Right ventricle myocardium superior (tissue), 1 donor: ENCODE measurements at regions of chr6 and their contacts with region 1.

Region 1: GRCh38 chr6:107318100-107318736 is 141.1 kb downstream of the PDSS2 start:
- DNase-seq: peak; percentile 47
- ATAC-seq: peak; percentile 84

Region 2: GRCh38 chr6:107674995-107675738 is 356.9 kb after region 1 on chr6:
- intact Hi-C with region 1: loop called (anchors 10 kb)
- DNase-seq: peak; percentile 84
- ATAC-seq: peak; percentile 93